Naive thymus-derived CD4-positive, alpha-beta T cell (primary cell): ENCODE measurements at regions of chr14 and their contacts with region 1.

Region 1: DNA sequence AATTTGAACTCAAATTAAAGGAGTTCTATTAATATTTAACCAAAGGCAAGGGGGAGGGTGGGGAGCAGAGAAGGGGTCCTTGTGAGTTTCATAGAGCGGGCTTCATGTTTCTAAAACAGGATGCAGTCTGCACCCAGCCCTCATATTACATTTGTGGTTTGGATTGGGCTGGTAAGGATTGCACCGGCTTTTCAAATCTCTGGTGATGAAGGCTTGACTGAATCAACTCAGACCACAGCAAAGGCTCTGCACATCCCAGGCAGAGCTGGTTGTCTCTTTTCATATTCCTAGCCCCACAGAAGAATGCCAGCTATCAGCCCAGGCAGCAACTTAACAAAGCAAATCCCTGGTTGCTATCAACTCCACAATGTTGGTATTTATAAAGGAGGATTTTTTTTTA is 1221.4 kb downstream of the VRK1 start:
- DNase-seq: peak in 7 of 9 donors; percentile 62 to 81 (median 74)
- ATAC-seq: peak; percentile 75
- H3K4me3 ChIP-seq: no peak overlapping the region
- H3K4me3 Mint-ChIP-seq: peak overlapping the region in 8 of 10 donors; percentile 9 to 65 (median 54)
- H3K27ac ChIP-seq: no peak overlapping the region
- H3K27ac Mint-ChIP-seq: peak overlapping the region in 8 of 9 donors; percentile 36 to 91 (median 79)
- H3K4me1 ChIP-seq: peaks cover 0 to 70% of the 10 kb centered on the region in 2 donors
- H3K4me1 Mint-ChIP-seq: peaks cover 30 to 81% (median 73%) of the 10 kb centered on the region in 7 donors
- H3K27me3 ChIP-seq: no peaks in the 10 kb centered on the region
- H3K27me3 Mint-ChIP-seq: no peaks in the 10 kb centered on the region

Region 2: DNA sequence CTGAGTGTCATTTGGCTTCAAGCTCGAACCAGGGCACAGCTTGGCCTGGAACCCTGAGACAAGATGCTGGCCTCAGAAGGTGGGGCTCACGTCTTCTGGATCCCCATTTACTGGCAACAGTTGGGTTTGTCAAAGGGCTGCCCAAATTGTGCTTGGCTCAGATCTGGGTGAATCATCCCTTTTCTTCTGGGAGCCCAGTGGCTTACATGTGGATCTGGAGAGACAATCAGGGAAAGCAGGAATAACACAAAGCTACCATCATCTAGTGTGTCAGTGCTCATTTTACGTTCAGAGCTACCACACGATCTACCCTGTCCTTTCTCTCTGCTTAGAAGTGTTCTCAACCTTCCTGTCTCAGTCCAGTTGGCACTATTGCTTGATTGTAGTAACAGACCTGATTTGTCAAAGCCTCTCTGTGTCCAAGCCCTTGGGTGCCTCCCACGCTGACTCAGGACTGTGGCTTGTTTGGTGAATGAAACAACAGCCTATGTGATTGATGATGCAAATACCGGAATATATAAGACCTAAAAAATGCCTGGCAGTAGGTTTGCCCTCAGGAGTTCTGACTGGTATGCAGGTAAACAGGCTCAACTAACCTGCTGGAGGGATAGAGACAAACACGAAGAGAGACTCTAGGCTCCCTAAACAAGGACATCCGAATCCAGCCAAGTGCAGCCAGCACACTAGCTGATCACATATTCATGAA is 247.1 kb before region 1 on chr14:
- CTCF ChIA-PET with region 1: no interaction called
- POLR2A ChIA-PET with region 1: no interaction called
- intact Hi-C with region 1: no loop called
- DNase-seq: no peak
- ATAC-seq: no peak
- H3K4me3 ChIP-seq: no peak overlapping the region
- H3K4me3 Mint-ChIP-seq: no peak overlapping the region
- H3K27ac ChIP-seq: no peak overlapping the region
- H3K27ac Mint-ChIP-seq: no peak overlapping the region
- H3K4me1 ChIP-seq: no peaks in the 10 kb centered on the region
- H3K4me1 Mint-ChIP-seq: peaks cover 0 to 8% (median 3%) of the 10 kb centered on the region in 7 donors
- H3K27me3 ChIP-seq: no peaks in the 10 kb centered on the region
- H3K27me3 Mint-ChIP-seq: no peaks in the 10 kb centered on the region

Region 3: DNA sequence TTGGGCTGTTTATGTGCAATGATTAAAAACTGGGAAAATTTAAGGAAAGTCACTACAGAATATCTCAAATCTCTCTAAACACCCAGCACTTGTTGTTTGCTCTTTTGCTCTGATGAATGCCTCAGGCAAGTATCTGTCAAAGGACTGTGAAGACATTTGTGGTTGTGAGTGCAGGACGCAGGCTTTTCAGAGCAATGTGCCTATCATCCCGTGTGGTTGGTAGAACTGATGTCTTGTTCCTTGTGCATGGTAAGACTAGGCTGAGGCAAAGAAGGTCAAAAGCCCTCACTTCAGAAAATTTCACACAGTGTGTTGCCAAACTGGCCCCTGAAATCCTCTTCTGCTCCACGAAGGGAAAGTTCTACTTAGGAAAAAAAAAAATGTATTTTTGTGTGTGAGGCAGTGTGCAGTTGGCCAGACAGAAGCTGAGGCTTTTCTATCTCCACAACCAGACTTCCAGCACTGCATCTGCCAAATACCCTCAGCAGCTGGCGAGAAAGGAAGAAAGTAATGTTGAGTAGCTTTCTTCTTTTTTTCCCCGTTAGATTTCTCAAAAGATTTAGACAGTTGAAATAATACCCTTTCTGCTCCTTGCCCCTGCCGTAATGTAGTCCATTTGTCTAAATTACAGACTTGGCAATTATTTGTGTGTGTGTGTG is 118.3 kb before region 1 on chr14:
- CTCF ChIA-PET with region 1: no interaction called
- POLR2A ChIA-PET with region 1: no interaction called
- intact Hi-C with region 1: no loop called
- DNase-seq: no peak
- ATAC-seq: no peak
- H3K4me3 ChIP-seq: no peak overlapping the region
- H3K4me3 Mint-ChIP-seq: no peak overlapping the region
- H3K27ac ChIP-seq: no peak overlapping the region
- H3K27ac Mint-ChIP-seq: peak overlapping the region in 2 of 9 donors; percentile 15 to 42
- H3K4me1 ChIP-seq: no peaks in the 10 kb centered on the region
- H3K4me1 Mint-ChIP-seq: peaks cover 0 to 10% (median 0%) of the 10 kb centered on the region in 7 donors
- H3K27me3 ChIP-seq: no peaks in the 10 kb centered on the region
- H3K27me3 Mint-ChIP-seq: no peaks in the 10 kb centered on the region

Region 4: GRCh38 chr14:97994020-97994531 is 24.6 kb before region 1 on chr14:
- CTCF ChIA-PET with region 1: interaction called, 3 read pairs
- POLR2A ChIA-PET with region 1: interaction called, 11 read pairs
- intact Hi-C with region 1: no loop called
- DNase-seq: peak in 8 of 9 donors; percentile 34 to 86 (median 78)
- ATAC-seq: peak; percentile 91
- H3K4me3 ChIP-seq: peak overlapping the region; percentile 33
- H3K4me3 Mint-ChIP-seq: peak overlapping the region; percentile 17 to 77 (median 65)
- H3K27ac ChIP-seq: peak overlapping the region; percentile 63
- H3K27ac Mint-ChIP-seq: peak overlapping the region; percentile 89 to 98 (median 93)
- H3K4me1 ChIP-seq: peaks cover 37 to 80% of the 10 kb centered on the region in 2 donors
- H3K4me1 Mint-ChIP-seq: peaks cover 37 to 89% (median 87%) of the 10 kb centered on the region in 7 donors
- H3K27me3 ChIP-seq: no peaks in the 10 kb centered on the region
- H3K27me3 Mint-ChIP-seq: no peaks in the 10 kb centered on the region

Region 5: GRCh38 chr14:98008381-98009113 is 10.1 kb before region 1 on chr14:
- CTCF ChIA-PET with region 1: interaction called, 3 read pairs
- POLR2A ChIA-PET with region 1: interaction called, 9 read pairs
- intact Hi-C with region 1: loop called in 1 of 2 experiments (anchors 1 kb)
- DNase-seq: peak in 4 of 9 donors; percentile 12 to 31 (median 26)
- ATAC-seq: no peak
- H3K4me3 ChIP-seq: no peak overlapping the region
- H3K4me3 Mint-ChIP-seq: peak overlapping the region in 5 of 10 donors; percentile 0 to 42 (median 25)
- H3K27ac ChIP-seq: no peak overlapping the region
- H3K27ac Mint-ChIP-seq: peak overlapping the region in 8 of 9 donors; percentile 5 to 60 (median 27)
- H3K4me1 ChIP-seq: peaks cover 0 to 26% of the 10 kb centered on the region in 2 donors
- H3K4me1 Mint-ChIP-seq: peaks cover 6 to 45% (median 37%) of the 10 kb centered on the region in 7 donors
- H3K27me3 ChIP-seq: no peaks in the 10 kb centered on the region
- H3K27me3 Mint-ChIP-seq: no peaks in the 10 kb centered on the region

Region 6: DNA sequence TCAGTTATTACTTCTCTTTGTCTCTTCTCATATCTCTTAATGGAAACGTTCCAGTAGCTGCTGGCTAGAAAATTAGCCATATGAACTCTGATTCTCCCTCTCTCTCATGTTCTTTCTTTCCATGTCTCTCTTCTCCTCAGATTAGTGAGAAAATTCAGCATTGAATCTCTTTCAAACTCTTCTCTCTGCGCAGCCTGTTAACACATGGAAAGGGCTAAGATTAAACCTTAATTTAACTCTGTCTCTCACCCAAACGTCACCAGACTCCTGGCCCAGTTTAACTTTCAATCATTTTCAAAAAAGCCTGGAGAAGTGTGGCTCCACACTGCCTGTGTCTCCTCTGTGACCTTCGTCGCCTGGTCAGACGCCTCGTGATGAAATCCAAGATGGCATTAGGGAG is 19.2 kb after region 1 on chr14:
- CTCF ChIA-PET with region 1: no interaction called
- POLR2A ChIA-PET with region 1: interaction called, 4 read pairs
- intact Hi-C with region 1: loop called in 1 of 2 experiments (anchors 2 kb)
- DNase-seq: no peak
- ATAC-seq: no peak
- H3K4me3 ChIP-seq: no peak overlapping the region
- H3K4me3 Mint-ChIP-seq: no peak overlapping the region
- H3K27ac ChIP-seq: no peak overlapping the region
- H3K27ac Mint-ChIP-seq: no peak overlapping the region
- H3K4me1 ChIP-seq: peaks cover 0 to 6% of the 10 kb centered on the region in 2 donors
- H3K4me1 Mint-ChIP-seq: peaks cover 0 to 24% (median 13%) of the 10 kb centered on the region in 7 donors
- H3K27me3 ChIP-seq: no peaks in the 10 kb centered on the region
- H3K27me3 Mint-ChIP-seq: no peaks in the 10 kb centered on the region

Region 7: GRCh38 chr14:98103705-98104104 is 85.1 kb after region 1 on chr14:
- CTCF ChIA-PET with region 1: no interaction called
- POLR2A ChIA-PET with region 1: no interaction called
- intact Hi-C with region 1: loop called in 1 of 2 experiments (anchors 5 kb)
- DNase-seq: peak in 7 of 9 donors; percentile 29 to 73 (median 62)
- ATAC-seq: peak; percentile 81
- H3K4me3 ChIP-seq: no peak overlapping the region
- H3K4me3 Mint-ChIP-seq: peak overlapping the region in 1 of 10 donors; percentile 0
- H3K27ac ChIP-seq: no peak overlapping the region
- H3K27ac Mint-ChIP-seq: peak overlapping the region in 7 of 9 donors; percentile 1 to 64 (median 57)
- H3K4me1 ChIP-seq: peaks cover 0 to 16% of the 10 kb centered on the region in 2 donors
- H3K4me1 Mint-ChIP-seq: peaks cover 10 to 53% (median 35%) of the 10 kb centered on the region in 7 donors
- H3K27me3 ChIP-seq: no peaks in the 10 kb centered on the region
- H3K27me3 Mint-ChIP-seq: no peaks in the 10 kb centered on the region